Activated naive CD4-positive, alpha-beta T cell treated with anti-CD3 and anti-CD28 coated beads for 36 hours (primary cell): ENCODE measurements at regions of chr6 and their contacts with region 1.

Region 1: GRCh38 chr6:114216789-114217467 is 125.9 kb downstream of the HS3ST5 start:
- DNase-seq: no peak
- H3K4me3 Mint-ChIP-seq: no peak overlapping the region
- H3K27ac Mint-ChIP-seq: no peak overlapping the region
- H3K4me1 Mint-ChIP-seq: no peaks in the 10 kb centered on the region
- H3K27me3 Mint-ChIP-seq: no peaks in the 10 kb centered on the region

Region 2: DNA sequence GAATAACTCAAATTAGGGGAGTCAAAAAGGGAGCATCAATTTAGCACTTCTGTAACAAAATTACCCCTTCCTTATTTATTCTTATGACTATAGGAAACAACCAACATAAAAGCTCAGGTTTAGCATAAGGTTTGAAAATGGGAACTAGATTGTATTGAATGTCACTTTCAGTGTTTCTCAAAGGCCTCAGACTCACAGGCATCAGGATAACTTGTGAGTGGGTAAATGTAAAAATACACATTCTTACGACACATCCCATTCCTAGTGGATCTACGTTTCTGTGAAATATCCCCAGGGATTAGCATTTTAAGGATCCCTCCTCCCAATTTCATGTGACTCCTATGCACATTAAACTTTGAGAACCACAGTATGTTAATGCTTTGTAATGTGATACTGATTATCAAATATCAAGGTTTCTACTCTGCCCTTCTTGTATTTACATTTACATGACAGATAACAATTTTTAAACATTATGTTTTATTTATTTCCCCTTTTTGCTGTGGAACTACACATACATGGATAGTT is 11.1 kb after region 1 on chr6:
- CTCF ChIA-PET with region 1: interaction called, 10 read pairs
- intact Hi-C with region 1: no loop called
- DNase-seq: no peak
- H3K4me3 Mint-ChIP-seq: no peak overlapping the region
- H3K27ac Mint-ChIP-seq: no peak overlapping the region
- H3K4me1 Mint-ChIP-seq: no peaks in the 10 kb centered on the region
- H3K27me3 Mint-ChIP-seq: no peaks in the 10 kb centered on the region